Left ventricle myocardium inferior (tissue), 1 donor: ENCODE measurements at regions of chr2 and their contacts with region 1.

Region 1: DNA sequence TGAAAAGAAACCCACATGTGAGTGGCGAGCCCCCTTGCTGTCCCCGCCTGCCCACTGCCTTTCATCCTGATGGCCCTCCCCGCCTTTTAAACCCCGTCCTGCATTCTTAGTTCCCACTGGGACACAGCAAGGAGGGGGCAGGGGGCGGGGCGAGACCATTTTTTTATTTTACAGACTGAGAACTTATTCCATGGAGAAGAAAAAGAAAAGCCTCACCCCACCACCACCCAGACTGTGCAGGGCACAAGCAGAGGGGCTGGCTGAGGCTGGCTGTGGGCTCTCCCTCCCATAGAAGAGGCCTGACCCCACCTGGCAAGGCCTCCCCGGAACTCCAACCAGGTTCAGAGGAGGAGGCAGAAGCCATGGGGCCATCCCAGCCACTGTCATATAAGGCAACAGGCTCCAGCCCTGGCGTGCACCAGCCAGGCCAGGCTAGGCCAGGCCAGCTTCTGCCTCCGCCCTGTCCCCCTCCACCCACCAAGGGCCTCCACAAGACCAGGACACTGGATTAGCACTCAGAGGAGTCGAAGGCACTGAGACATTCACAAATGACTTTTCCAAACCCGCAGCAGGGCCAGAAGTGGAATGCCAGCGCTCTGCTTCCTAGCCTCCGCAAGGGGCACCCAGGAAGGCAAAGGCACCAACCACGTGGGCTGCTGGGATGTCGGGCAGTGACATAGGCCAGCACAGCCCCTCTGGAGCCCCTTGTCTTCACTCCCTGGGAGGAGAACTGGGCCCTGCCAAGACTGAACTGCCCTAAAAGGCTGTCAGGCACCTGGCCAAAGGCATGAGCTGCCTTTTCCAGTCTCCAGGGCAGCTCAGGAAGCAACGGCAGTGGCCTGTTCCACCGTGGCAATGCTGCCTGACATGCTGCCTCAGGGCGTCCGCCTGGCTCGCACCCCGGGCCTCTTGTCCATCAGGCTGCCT is 37.5 kb upstream of the SEMA4C start:
- DNase-seq: peak; percentile 87
- H3K4me3 ChIP-seq: peak overlapping the region; percentile 54
- H3K27ac ChIP-seq: peak overlapping the region; percentile 93
- H3K4me1 ChIP-seq: peaks cover 55% of the 10 kb centered on the region
- H3K27me3 ChIP-seq: no peaks in the 10 kb centered on the region
- CTCF ChIP-seq: peak; percentile 22

Region 2: GRCh38 chr2:96233880-96234316 is 673.5 kb before region 1 on chr2:
- intact Hi-C with region 1: no loop called
- DNase-seq: no peak
- H3K4me3 ChIP-seq: no peak overlapping the region
- H3K27ac ChIP-seq: no peak overlapping the region
- H3K4me1 ChIP-seq: no peaks in the 10 kb centered on the region
- H3K27me3 ChIP-seq: no peaks in the 10 kb centered on the region
- CTCF ChIP-seq: no peak

Region 3: DNA sequence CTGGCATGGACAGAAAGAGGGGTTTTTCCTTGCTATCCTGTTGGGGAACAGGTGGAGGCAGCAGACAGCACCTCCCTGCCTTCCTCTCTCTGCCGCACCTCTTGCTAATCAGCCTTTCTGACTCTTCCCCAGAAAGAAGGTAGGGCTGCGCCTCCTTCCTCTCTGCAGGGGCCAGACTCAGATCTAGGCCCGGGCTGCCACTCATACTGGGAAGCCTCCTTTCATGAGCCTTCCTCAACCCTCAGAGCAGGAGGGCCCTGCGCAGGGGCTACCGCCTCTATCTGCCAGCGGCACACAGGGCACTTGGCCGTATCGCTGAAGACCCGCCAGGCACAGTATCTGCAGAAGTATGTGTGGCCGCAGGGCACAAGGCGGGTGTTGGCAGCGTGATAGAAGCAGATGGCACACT is 409.4 kb before region 1 on chr2:
- intact Hi-C with region 1: no loop called
- DNase-seq: no peak
- H3K4me3 ChIP-seq: no peak overlapping the region
- H3K27ac ChIP-seq: no peak overlapping the region
- H3K4me1 ChIP-seq: peaks cover 22% of the 10 kb centered on the region
- H3K27me3 ChIP-seq: peaks cover 32% of the 10 kb centered on the region
- CTCF ChIP-seq: no peak

Region 4: GRCh38 chr2:96869822-96870625 is 37.4 kb before region 1 on chr2 and contains the start of gene SEMA4C:
- intact Hi-C with region 1: loop called (anchors 5 kb)
- DNase-seq: peak; percentile 79
- H3K4me3 ChIP-seq: peak within 1 kb of the TSS; percentile 83
- H3K27ac ChIP-seq: peak within 1 kb of the TSS; percentile 98
- H3K4me1 ChIP-seq: peaks cover 98% of the 10 kb centered on the region
- H3K27me3 ChIP-seq: no peaks in the 10 kb centered on the region
- CTCF ChIP-seq: no peak
- total RNA-seq, gene SEMA4C: 16.6 TPM